CD4-positive, alpha-beta memory T cell (primary cell): ENCODE measurements at regions of chr14 and their contacts with region 1.

Region 1: DNA sequence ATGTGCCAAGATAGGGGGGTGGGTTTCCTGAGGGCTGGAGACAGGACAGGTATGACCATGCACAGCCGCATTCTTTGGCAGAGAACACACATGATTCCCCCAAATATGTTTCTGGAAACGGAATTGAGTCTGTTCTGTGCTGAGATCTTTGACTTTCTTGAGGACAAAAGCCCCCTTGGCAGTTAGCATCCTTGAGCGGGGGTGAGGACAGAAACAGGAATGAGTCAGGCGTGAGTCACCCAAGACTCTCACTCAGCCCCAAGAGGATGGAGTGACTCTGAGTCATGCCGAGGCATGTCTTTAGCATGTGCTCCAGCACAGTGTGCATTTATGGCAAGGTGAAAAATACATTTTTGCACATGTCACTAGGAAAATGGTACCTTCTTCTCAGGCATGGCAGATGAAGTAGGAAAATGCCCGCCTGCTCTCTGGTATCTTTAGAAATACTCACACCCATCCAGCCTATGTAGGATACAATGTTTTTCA is 52.1 kb downstream of the DAD1 start:
- DNase-seq: peak in 4 of 5 donors; percentile 54 to 97 (median 62)
- H3K4me3 ChIP-seq: peak overlapping the region; percentile 13 to 46
- H3K4me3 Mint-ChIP-seq: peak overlapping the region; percentile 69 to 91 (median 85)
- H3K27ac ChIP-seq: peak overlapping the region; percentile 72
- H3K27ac Mint-ChIP-seq: peak overlapping the region; percentile 92 to 100 (median 98)
- H3K4me1 ChIP-seq: peaks cover 99% of the 10 kb centered on the region
- H3K4me1 Mint-ChIP-seq: peaks cover 86 to 100% (median 91%) of the 10 kb centered on the region in 4 donors
- H3K27me3 ChIP-seq: no peaks in the 10 kb centered on the region
- H3K27me3 Mint-ChIP-seq: no peaks in the 10 kb centered on the region

Region 2: DNA sequence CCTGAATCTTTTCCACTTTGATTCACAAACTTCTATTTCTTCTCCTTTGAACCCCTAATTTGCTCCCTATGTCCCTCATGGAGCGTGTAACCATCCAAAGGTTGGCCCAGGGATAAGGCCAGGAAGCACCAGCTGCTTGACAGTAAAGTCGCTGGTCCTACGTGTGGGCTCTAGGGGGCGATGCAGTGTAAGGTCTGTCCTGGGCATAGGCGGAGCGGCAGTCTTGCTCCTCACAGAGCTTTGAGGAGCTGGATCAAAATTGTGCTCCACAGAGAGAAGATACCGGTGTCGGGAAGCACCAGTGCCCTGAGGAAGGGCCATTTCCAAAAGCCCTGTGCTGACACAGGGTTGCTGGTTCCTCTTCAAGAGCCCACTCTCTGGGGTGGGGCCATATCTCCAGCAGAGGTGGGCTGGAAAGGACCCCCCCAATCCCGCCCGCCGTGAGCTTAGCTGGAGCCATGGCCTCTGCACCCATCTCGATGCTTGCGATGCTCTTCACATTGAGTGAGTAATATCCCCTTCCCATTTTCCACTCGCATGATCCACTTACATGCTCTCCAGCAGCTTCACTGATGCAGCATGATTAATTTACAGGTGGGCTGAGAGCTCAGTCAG is 813.4 kb before region 1 on chr14:
- CTCF ChIA-PET with region 1: interaction called, 3 read pairs
- POLR2A ChIA-PET with region 1: interaction called, 11 read pairs
- intact Hi-C with region 1: no loop called
- DNase-seq: peak in 3 of 5 donors; percentile 37 to 62 (median 39)
- H3K4me3 ChIP-seq: no peak overlapping the region
- H3K4me3 Mint-ChIP-seq: peak overlapping the region; percentile 56 to 83 (median 78)
- H3K27ac ChIP-seq: peak overlapping the region; percentile 22
- H3K27ac Mint-ChIP-seq: peak overlapping the region; percentile 4 to 90 (median 58)
- H3K4me1 ChIP-seq: no peaks in the 10 kb centered on the region
- H3K4me1 Mint-ChIP-seq: peaks cover 0 to 9% (median 0%) of the 10 kb centered on the region in 4 donors
- H3K27me3 ChIP-seq: no peaks in the 10 kb centered on the region
- H3K27me3 Mint-ChIP-seq: peaks cover 15 to 16% of the 10 kb centered on the region in 2 donors

Region 3: DNA sequence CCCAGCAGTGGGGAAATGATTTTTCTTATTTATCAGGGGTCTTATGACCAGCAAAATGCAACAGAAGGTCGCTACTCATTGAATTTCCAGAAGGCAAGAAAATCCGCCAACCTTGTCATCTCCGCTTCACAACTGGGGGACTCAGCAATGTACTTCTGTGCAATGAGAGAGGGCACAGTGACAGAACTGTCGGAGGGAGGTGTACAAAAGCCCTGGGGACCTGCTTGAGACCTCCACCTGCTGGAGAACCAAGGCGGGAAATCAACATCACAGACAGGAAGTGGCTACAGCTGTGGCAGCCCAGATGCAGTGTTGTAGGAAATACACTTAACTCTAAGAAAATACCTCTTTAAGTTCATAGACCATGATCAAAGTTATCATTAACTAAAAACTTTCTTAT is 612.4 kb before region 1 on chr14:
- CTCF ChIA-PET with region 1: no interaction called
- POLR2A ChIA-PET with region 1: interaction called, 12 read pairs
- intact Hi-C with region 1: no loop called
- DNase-seq: peak; percentile 61 to 82 (median 69)
- H3K4me3 ChIP-seq: peak overlapping the region in 1 of 2 donors; percentile 28
- H3K4me3 Mint-ChIP-seq: peak overlapping the region; percentile 65 to 87 (median 78)
- H3K27ac ChIP-seq: peak overlapping the region; percentile 46
- H3K27ac Mint-ChIP-seq: peak overlapping the region; percentile 69 to 96 (median 87)
- H3K4me1 ChIP-seq: peaks cover 60% of the 10 kb centered on the region
- H3K4me1 Mint-ChIP-seq: peaks cover 30 to 54% (median 43%) of the 10 kb centered on the region in 4 donors
- H3K27me3 ChIP-seq: no peaks in the 10 kb centered on the region
- H3K27me3 Mint-ChIP-seq: no peaks in the 10 kb centered on the region

Region 4: GRCh38 chr14:22418631-22419030 is 118.3 kb before region 1 on chr14:
- CTCF ChIA-PET with region 1: no interaction called
- POLR2A ChIA-PET with region 1: no interaction called
- intact Hi-C with region 1: no loop called
- DNase-seq: no peak
- H3K4me3 ChIP-seq: no peak overlapping the region
- H3K4me3 Mint-ChIP-seq: no peak overlapping the region
- H3K27ac ChIP-seq: no peak overlapping the region
- H3K27ac Mint-ChIP-seq: no peak overlapping the region
- H3K4me1 ChIP-seq: no peaks in the 10 kb centered on the region
- H3K4me1 Mint-ChIP-seq: no peaks in the 10 kb centered on the region
- H3K27me3 ChIP-seq: no peaks in the 10 kb centered on the region
- H3K27me3 Mint-ChIP-seq: no peaks in the 10 kb centered on the region

Region 5: DNA sequence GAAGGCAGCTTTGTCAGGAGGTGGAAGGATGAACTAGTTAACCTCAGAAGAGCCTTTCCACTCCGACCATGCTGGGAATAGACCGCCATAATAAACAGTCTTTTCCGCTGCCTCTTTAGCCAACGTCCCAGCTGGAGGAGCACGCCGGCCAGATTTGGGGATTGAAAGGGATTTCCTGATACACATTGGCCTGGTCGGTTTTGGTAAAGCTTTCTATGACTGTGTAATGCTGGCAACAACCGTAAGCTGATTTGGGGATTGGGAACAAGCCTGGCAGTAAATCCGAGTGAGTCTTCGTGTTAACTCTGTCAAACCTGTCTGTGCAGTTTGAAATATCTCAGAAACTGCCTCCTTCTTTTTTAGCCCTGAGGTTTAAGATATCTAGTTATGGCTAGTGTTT is 34.9 kb before region 1 on chr14:
- CTCF ChIA-PET with region 1: no interaction called
- POLR2A ChIA-PET with region 1: interaction called, 1,012 read pairs
- intact Hi-C with region 1: no loop called
- DNase-seq: no peak
- H3K4me3 ChIP-seq: peak overlapping the region; percentile 43 to 62
- H3K4me3 Mint-ChIP-seq: peak overlapping the region; percentile 86 to 96 (median 90)
- H3K27ac ChIP-seq: peak overlapping the region; percentile 67
- H3K27ac Mint-ChIP-seq: peak overlapping the region; percentile 87 to 100 (median 94)
- H3K4me1 ChIP-seq: peaks cover 67% of the 10 kb centered on the region
- H3K4me1 Mint-ChIP-seq: peaks cover 25 to 93% (median 30%) of the 10 kb centered on the region in 4 donors
- H3K27me3 ChIP-seq: no peaks in the 10 kb centered on the region
- H3K27me3 Mint-ChIP-seq: no peaks in the 10 kb centered on the region

Region 6: GRCh38 chr14:22526218-22526617 is 10.7 kb before region 1 on chr14:
- CTCF ChIA-PET with region 1: interaction called, 24 read pairs
- POLR2A ChIA-PET with region 1: interaction called, 1,012 read pairs
- intact Hi-C with region 1: loop called (anchors 1 kb)
- DNase-seq: no peak
- H3K4me3 ChIP-seq: peak overlapping the region; percentile 33 to 39
- H3K4me3 Mint-ChIP-seq: peak overlapping the region; percentile 83 to 91 (median 90)
- H3K27ac ChIP-seq: peak overlapping the region; percentile 76
- H3K27ac Mint-ChIP-seq: peak overlapping the region; percentile 86 to 100 (median 96)
- H3K4me1 ChIP-seq: peaks cover 97% of the 10 kb centered on the region
- H3K4me1 Mint-ChIP-seq: peaks cover 71 to 99% (median 81%) of the 10 kb centered on the region in 4 donors
- H3K27me3 ChIP-seq: no peaks in the 10 kb centered on the region
- H3K27me3 Mint-ChIP-seq: no peaks in the 10 kb centered on the region